Heart left ventricle (tissue), 16 donors: ENCODE measurements at regions of chr17 and their contacts with region 1.

Region 1: GRCh38 chr17:15409721-15410250 is 57.6 kb downstream of the CDRT4 start:
- DNase-seq: peak in 1 of 5 donors; percentile 60
- ATAC-seq: peak; percentile 46 to 75 (median 66)
- H3K4me3 ChIP-seq: peak overlapping the region in 6 of 12 donors; percentile 16 to 43 (median 30)
- H3K27ac ChIP-seq: peak overlapping the region; percentile 15 to 82 (median 76)
- H3K4me1 ChIP-seq: peaks cover 0 to 59% (median 9%) of the 10 kb centered on the region in 12 donors
- H3K27me3 ChIP-seq: no peaks in the 10 kb centered on the region
- CTCF ChIP-seq: no peak
- POLR2A ChIP-seq: peak in 1 of 2 donors; percentile 17

Region 2: GRCh38 chr17:15262291-15263205 is 147.2 kb before region 1 on chr17:
- intact Hi-C with region 1: loop called in 2 of 10 experiments (anchors 2 to 5 kb)
- DNase-seq: peak; percentile 90 to 96 (median 93)
- ATAC-seq: peak; percentile 82 to 89 (median 86)
- H3K4me3 ChIP-seq: peak overlapping the region; percentile 50 to 92 (median 78)
- H3K27ac ChIP-seq: peak overlapping the region; percentile 94 to 99 (median 97)
- H3K4me1 ChIP-seq: peaks cover 2 to 62% (median 32%) of the 10 kb centered on the region in 12 donors
- H3K27me3 ChIP-seq: peaks cover 0 to 30% (median 0%) of the 10 kb centered on the region in 9 donors
- CTCF ChIP-seq: peak in 10 of 12 donors; percentile 14 to 60 (median 32)
- POLR2A ChIP-seq: peak; percentile 36 to 92

Region 3: GRCh38 chr17:15351925-15352324 is 57.9 kb before region 1 on chr17:
- intact Hi-C with region 1: loop called in 1 of 10 experiments (anchors 10 kb)
- DNase-seq: no peak
- ATAC-seq: peak in 3 of 4 donors; percentile 69 to 92 (median 80)
- H3K4me3 ChIP-seq: no peak overlapping the region
- H3K27ac ChIP-seq: peak overlapping the region in 2 of 12 donors; percentile 5 to 84
- H3K4me1 ChIP-seq: peaks cover 0 to 7% (median 0%) of the 10 kb centered on the region in 12 donors
- H3K27me3 ChIP-seq: no peaks in the 10 kb centered on the region
- CTCF ChIP-seq: no peak
- POLR2A ChIP-seq: no peak